ENCODE measurements at regions of chr17 and their contacts with region 1.

Region 1: DNA sequence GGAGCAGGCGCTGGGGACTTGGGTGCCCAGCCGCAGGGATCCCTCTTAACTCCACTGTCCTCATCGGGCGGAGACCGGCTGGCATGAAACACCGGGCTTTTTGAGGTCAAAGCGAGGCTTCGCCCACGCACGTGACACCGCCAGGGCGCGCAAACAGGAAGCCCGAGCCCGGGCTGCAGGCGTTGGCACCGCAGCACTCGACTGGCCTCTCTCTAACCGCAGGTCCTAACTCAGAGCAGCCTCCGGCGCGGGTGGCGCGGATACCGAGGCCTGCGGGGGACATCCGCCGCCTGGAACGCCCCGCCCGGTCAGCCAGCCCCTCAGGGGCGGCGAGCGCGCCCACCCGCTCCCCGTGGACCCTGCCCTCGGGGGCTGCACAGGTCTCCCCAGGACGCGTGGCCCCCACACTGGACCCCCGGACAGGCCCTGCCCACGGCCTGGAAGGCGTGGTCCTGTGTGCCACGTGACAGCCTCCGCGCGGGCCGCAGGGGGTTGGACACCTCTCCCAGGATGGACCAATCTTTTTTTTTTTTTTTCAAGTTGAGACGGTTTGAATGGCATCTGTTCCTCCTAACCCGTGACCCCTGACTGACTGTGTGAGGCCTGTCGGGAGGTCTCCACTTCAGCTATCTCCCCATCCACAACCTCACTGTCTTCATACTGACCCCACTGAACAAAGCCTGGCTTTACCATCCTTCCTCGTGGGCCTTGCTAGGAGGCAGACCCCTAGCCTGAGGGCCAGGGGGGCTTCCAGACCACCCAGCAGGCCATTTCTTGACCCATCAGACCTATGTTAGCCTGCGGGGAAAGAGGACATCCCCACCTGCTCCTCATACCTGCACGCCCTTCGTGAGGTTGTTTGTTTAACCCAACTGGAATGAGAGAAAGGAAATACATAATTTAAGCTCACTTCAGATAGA is 8.4 kb upstream of the SLC47A2 start:
- DNase-seq: no peak
- CTCF ChIP-seq: no peak

Region 2: GRCh38 chr17:19614900-19615299 is 109.9 kb before region 1 on chr17:
- in situ Hi-C with region 1: loop called (anchors 25 kb)
- DNase-seq: no peak
- CTCF ChIP-seq: no peak

Region 3: DNA sequence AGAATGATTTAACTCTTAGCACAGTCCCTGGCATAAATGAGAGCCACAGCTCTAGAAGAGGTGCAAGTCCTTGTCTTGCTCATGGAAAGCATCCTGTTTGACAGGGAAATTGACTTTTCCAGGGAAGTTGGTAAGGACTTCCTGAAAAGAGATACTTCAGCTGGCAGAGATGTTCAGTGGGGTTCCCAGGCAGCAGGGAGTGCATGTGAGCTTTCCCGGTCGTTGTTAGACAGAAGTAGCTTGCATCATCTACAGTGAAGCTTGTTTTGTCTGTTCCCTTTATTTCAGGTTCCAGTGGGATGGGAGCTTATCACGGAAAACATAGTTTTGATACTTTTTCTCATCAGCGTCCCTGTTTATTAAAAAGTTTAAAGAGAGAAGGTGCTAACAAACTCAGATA is 53.3 kb before region 1 on chr17:
- in situ Hi-C with region 1: no loop called
- DNase-seq: no peak
- CTCF ChIP-seq: no peak

Region 4: DNA sequence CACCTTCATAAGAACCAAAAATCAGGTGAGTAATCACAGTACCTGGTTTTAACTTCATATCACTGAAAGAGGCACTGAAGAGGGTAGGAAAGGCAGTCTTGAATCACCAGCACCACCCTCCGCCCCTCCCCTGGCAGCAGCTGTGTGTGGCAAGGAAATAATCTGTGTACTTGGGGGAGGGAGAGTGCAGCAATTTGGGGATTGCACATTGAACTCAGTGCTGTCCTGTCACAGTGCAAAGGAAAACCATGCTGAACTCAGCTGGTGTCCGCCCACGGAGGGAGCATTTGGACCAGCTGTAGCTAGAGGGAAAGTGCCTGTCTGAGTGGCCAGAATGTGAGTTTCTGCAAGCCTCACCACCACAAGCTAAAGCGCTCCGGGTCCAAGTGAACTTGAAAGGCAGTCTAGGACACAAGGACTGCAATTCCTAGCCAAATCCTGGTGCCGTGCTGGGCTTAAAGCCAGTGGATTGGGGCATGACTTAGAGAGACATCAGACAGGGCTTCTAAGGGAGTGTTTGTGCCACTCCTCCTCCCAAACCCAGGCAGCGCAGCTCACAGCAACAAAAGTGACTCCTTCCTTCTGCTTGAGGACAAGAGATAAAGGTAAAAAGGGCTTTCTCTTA is 63.1 kb after region 1 on chr17:
- in situ Hi-C with region 1: no loop called
- DNase-seq: no peak
- CTCF ChIP-seq: no peak

Measured in GM13977 (cell line).